Right ventricle myocardium superior (tissue), 1 donor: ENCODE measurements at regions of chr19 and their contacts with region 1.

Region 1: DNA sequence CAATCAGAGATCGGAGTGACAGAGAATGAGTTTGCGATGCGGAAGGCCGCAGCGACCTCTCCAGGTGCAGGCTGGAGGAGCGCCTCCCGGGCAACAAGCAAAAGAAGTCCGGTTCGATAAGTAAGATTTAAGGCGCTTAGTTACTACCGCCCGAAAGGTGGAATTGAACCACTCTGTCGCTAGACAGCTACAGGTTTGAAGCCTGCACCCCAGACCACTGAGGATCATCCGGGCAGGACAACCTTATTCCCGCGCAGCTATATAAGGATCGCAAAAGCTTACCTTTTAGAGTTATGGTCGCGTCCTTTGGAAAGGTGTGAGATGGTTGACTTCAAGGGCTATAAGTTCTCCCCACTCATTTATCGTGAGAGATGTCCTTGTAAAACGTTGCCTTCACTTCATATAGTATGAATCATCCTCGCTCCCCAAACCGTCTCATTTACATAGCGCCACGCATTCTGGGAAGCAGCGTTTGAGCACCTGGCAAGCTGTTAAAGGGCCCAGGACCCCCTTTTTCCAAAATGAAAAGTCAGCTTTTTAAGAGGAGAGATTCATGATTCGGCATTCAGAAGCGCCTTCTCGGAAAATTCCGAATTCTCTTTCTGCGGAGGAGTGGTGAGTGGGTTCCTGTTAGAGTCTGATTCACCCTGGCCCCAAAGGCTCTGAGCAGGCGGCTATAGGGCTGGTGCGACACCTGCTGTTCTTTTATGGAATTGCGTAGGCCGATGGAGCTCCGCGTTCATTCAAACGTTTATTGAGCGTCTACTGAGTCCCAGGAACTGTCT is 10.8 kb downstream of the FOSB start:
- DNase-seq: peak; percentile 88
- ATAC-seq: peak; percentile 96

Region 2: GRCh38 chr19:45306518-45307027 is 172.1 kb before region 1 on chr19:
- intact Hi-C with region 1: no loop called
- DNase-seq: no peak
- ATAC-seq: no peak

Region 3: GRCh38 chr19:45439569-45440254 is 38.9 kb before region 1 on chr19:
- intact Hi-C with region 1: loop called (anchors 1 kb)
- DNase-seq: peak; percentile 92
- ATAC-seq: peak; percentile 80